BJ (cell line): ENCODE measurements at regions of chr17 and their contacts with region 1.

Region 1: DNA sequence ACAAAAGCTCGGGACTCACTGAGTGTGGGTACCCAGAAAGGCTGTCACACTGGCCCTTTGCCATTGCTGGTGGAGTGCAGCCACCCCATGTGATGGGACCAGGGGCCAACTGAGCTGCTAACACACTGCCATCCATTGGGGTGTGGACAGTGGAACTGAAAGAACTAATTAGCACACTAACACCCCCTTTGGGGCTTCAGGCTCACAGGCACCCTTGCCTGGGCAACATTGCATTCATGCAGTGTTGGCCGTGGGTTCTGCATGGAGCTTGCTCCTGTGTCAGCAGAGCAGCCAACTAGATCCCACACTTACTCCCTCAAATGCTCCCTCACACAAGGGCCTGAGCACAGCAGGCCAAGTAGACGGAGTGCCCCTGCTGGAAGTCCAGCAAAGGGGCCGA is 476.0 kb upstream of the ASIC2 start:
- DNase-seq: no peak
- H3K4me3 ChIP-seq: no peak overlapping the region
- H3K27me3 ChIP-seq: no peaks in the 10 kb centered on the region
- CTCF ChIP-seq: no peak

Region 2: DNA sequence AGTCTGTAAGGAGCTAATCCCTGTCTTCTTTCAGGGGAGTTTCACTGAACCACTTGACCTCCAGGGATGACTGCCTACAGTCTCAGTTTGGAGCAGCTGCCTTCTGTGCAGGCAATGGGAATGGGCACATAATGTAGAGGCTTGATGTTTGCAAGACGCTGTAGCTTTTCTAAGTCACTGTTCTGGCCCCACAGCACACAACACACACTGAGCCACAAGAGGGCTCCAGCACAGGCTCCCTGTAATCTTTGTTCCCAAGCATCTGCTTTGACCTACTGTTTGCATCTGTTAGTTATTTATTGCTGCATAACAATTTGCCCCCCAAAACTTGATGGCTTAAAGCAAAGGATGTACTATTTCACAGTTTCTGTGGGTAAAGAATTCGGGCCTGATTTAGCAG is 56.9 kb before region 1 on chr17:
- CTCF ChIA-PET with region 1: no interaction called
- POLR2A ChIA-PET with region 1: no interaction called
- DNase-seq: no peak
- H3K4me3 ChIP-seq: no peak overlapping the region
- H3K27me3 ChIP-seq: no peaks in the 10 kb centered on the region
- CTCF ChIP-seq: no peak

Region 3: GRCh38 chr17:33779225-33779591 is 10.1 kb after region 1 on chr17:
- CTCF ChIA-PET with region 1: interaction called, 13 read pairs
- POLR2A ChIA-PET with region 1: no interaction called
- DNase-seq: peak; percentile 3
- H3K4me3 ChIP-seq: no peak overlapping the region
- H3K27me3 ChIP-seq: no peaks in the 10 kb centered on the region
- CTCF ChIP-seq: peak; percentile 89